Brain microvascular endothelial cell (primary cell): ENCODE measurements at regions of chr1 and their contacts with region 1.

Region 1: GRCh38 chr1:155324611-155325528 is 4.2 kb downstream of the RUSC1 start:
- DNase-seq: peak; percentile 36
- H3K4me3 ChIP-seq: peak overlapping the region; percentile 82
- H3K27ac ChIP-seq: peak overlapping the region; percentile 16
- H3K27me3 ChIP-seq: no peaks in the 10 kb centered on the region
- CTCF ChIP-seq: peak; percentile 72

Region 2: GRCh38 chr1:155022927-155023236 is 302.0 kb before region 1 on chr1:
- in situ Hi-C with region 1: no loop called
- DNase-seq: no peak
- H3K4me3 ChIP-seq: no peak overlapping the region
- H3K27ac ChIP-seq: no peak overlapping the region
- H3K27me3 ChIP-seq: no peaks in the 10 kb centered on the region
- CTCF ChIP-seq: no peak

Region 3: DNA sequence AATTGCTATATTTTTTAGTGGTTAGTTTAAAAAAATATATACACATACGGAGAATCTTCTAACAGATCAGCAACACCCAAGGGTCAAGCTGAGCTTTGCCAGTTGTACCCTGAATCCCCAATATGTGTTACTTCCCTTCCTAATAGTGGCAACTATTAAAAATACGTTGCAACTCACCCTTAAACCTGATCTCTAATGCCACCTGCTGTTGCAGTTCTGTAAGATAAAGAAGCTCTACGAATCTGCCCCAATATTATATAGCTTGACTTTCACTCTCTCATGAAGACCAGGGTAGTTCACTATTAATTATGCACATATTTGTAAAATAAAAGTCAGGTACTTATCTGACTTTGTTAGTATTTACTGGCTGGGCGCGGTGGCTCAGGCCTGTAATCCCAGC is 179.3 kb after region 1 on chr1:
- in situ Hi-C with region 1: loop called (anchors 25 kb)
- DNase-seq: peak; percentile 12
- H3K4me3 ChIP-seq: no peak overlapping the region
- H3K27ac ChIP-seq: no peak overlapping the region
- H3K27me3 ChIP-seq: no peaks in the 10 kb centered on the region
- CTCF ChIP-seq: peak; percentile 48